Activated CD4-positive, alpha-beta memory T cell treated with anti-CD3 and anti-CD28 coated beads for 36 hours (primary cell): ENCODE measurements at regions of chr21 and their contacts with region 1.

Region 1: GRCh38 chr21:31354604-31355443 is 10.8 kb upstream of the TIAM1 start:
- DNase-seq: peak; percentile 90
- H3K4me3 Mint-ChIP-seq: peak overlapping the region; percentile 33
- H3K27ac Mint-ChIP-seq: peak overlapping the region; percentile 91
- H3K4me1 Mint-ChIP-seq: peaks cover 49% of the 10 kb centered on the region
- H3K27me3 Mint-ChIP-seq: no peaks in the 10 kb centered on the region

Region 2: DNA sequence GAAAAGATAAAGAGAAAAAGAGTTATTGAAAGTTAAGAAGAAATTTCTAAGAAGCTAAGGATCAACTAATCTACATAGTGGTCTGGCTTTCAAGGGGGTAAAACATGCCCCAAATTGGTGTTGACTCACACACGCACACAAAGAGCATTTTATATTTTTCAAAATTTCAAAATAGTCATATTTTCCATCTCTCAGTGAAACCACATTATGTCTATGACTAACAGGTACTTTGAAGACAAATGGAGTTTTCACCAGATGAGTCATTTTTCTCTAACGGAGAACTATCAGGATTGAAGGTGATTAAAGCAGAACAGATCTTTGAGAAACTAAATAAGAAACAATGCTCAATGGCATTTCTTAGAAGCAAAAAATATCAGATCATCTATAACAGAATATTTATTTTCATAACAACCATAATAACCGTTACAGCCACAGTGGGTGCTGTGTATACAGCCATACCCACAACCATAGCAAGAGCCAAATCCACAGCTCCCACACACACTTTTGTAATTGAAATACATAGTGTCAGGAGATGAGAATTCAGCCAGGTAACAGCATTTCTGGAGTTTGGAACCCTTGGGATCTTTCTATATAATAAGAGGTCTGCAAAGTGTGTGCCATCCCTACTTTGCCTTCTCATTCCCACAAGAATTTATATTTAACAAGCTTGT is 636.5 kb before region 1 on chr21 and contains the start of gene KRTAP21-3:
- CTCF ChIA-PET with region 1: no interaction called
- POLR2A ChIA-PET with region 1: no interaction called
- intact Hi-C with region 1: loop called (anchors 1 kb)
- DNase-seq: peak; percentile 38
- H3K4me3 Mint-ChIP-seq: no peak within 1 kb of the TSS
- H3K27ac Mint-ChIP-seq: peak within 1 kb of the TSS; percentile 28
- H3K4me1 Mint-ChIP-seq: peaks cover 23% of the 10 kb centered on the region
- H3K27me3 Mint-ChIP-seq: no peaks in the 10 kb centered on the region
- total RNA-seq, gene KRTAP21-3: not detected

Region 3: GRCh38 chr21:31198575-31198974 is 156.2 kb before region 1 on chr21:
- CTCF ChIA-PET with region 1: interaction called, 4 read pairs
- POLR2A ChIA-PET with region 1: interaction called, 10 read pairs
- intact Hi-C with region 1: loop called (anchors 1 kb)
- DNase-seq: no peak
- H3K4me3 Mint-ChIP-seq: no peak overlapping the region
- H3K27ac Mint-ChIP-seq: no peak overlapping the region
- H3K4me1 Mint-ChIP-seq: peaks cover 44% of the 10 kb centered on the region
- H3K27me3 Mint-ChIP-seq: no peaks in the 10 kb centered on the region

Region 4: GRCh38 chr21:31343680-31344480 is 10.9 kb before region 1 on chr21 and contains the start of gene TIAM1:
- CTCF ChIA-PET with region 1: interaction called, 6 read pairs
- POLR2A ChIA-PET with region 1: interaction called, 25 read pairs
- intact Hi-C with region 1: loop called (anchors 1 kb)
- DNase-seq: peak; percentile 64
- H3K4me3 Mint-ChIP-seq: peak within 1 kb of the TSS; percentile 93
- H3K27ac Mint-ChIP-seq: peak within 1 kb of the TSS; percentile 82
- H3K4me1 Mint-ChIP-seq: peaks cover 64% of the 10 kb centered on the region
- H3K27me3 Mint-ChIP-seq: no peaks in the 10 kb centered on the region
- total RNA-seq, gene TIAM1: 74.8 to 74.9 TPM

Region 5: GRCh38 chr21:31509194-31510017 is 154.6 kb after region 1 on chr21:
- CTCF ChIA-PET with region 1: no interaction called
- POLR2A ChIA-PET with region 1: no interaction called
- intact Hi-C with region 1: loop called (anchors 1 kb)
- DNase-seq: peak; percentile 92
- H3K4me3 Mint-ChIP-seq: peak overlapping the region; percentile 44
- H3K27ac Mint-ChIP-seq: peak overlapping the region; percentile 60
- H3K4me1 Mint-ChIP-seq: peaks cover 24% of the 10 kb centered on the region
- H3K27me3 Mint-ChIP-seq: no peaks in the 10 kb centered on the region

Region 6: DNA sequence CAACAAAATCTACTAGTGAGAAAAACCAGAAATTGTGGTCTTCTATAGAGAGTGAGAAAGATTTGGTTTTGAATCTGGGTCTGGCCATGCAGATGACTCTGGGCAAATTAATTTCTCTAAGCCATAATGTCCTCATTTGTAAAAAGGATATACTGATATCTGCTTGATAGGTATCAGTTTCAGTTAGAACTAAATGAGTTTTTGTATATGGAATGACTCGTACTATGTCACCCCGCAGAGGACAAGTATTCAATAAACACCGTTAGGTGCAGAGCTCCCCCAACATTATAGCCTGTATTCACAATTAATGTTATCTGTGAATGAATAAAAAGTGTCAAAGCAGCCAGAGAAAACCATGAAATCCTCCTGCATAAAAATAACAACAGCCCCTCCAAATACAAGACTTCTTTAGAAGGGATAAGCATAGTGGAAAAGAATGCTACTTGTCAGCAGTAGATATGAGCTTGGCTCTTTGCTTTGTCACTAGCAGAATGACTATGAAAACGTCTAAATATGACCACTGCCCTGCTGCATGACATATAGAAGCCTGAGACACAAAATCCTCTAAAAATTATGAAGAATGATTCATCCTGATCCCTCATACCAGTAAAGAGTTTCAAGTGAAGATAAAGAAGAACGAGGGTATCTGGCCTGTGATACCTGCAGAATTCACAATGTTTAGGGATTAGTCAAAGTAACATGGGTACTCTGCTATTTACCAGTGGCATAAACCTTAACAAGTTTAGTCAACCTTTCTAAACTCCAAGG is 359.3 kb after region 1 on chr21:
- CTCF ChIA-PET with region 1: no interaction called
- POLR2A ChIA-PET with region 1: no interaction called
- intact Hi-C with region 1: loop called (anchors 5 kb)
- DNase-seq: no peak
- H3K4me3 Mint-ChIP-seq: no peak overlapping the region
- H3K27ac Mint-ChIP-seq: peak overlapping the region; percentile 71
- H3K4me1 Mint-ChIP-seq: peaks cover 84% of the 10 kb centered on the region
- H3K27me3 Mint-ChIP-seq: no peaks in the 10 kb centered on the region